ENCODE measurements at regions of chr9 and their contacts with region 1.

Region 1: DNA sequence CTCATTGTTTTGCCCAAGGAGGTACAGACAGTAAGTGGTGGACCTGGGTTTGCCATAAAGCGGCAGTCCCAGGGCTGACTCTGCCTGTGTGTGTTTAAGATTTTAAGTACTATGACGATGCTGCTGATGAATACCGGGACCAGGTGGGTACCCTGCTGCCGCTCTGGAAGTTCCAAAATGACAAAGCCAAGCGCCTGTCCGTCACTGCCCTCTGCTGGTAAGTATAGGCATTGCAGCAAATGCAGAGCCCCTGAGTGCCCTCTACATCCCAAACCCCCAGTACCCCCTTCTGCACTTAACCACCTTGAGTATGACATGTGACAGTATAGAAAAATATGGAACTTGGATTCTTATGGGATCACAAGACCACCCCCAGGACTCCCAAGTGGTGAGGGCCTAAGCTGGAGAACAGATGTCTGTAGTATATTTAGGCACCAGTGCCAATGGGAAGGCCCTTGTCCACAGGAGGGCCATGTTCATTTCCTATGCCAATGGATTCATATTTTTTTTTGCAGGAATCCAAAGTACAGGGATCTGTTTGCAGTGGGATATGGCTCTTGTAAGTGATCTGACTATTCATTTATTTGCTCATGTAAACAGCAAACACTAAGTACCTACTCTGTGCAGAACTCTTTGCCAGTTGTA is 22.0 kb downstream of the ENHO start:
- DNase-seq: peak in 4 of 5 donors; percentile 42 to 48 (median 46)
- ATAC-seq: peak; percentile 30 to 71 (median 54)
- H3K4me3 ChIP-seq: no peak overlapping the region
- H3K27ac ChIP-seq: no peak overlapping the region
- H3K4me1 ChIP-seq: peaks cover 0 to 26% (median 15%) of the 10 kb centered on the region in 12 donors
- H3K27me3 ChIP-seq: peaks cover 0 to 5% (median 0%) of the 10 kb centered on the region in 9 donors
- CTCF ChIP-seq: peak; percentile 94 to 99 (median 98)
- POLR2A ChIP-seq: no peak

Region 2: GRCh38 chr9:34328987-34329832 is 171.5 kb before region 1 on chr9 and contains the starts of genes KIF24 and NUDT2:
- intact Hi-C with region 1: loop called in 7 of 10 experiments (anchors 2 to 10 kb)
- DNase-seq: peak; percentile 96 to 99 (median 98)
- ATAC-seq: peak; percentile 97 to 98 (median 98)
- H3K4me3 ChIP-seq: peak within 1 kb of the TSS; percentile 47 to 88 (median 80)
- H3K27ac ChIP-seq: peak within 1 kb of the TSS; percentile 88 to 96 (median 91)
- H3K4me1 ChIP-seq: peaks cover 0 to 35% (median 14%) of the 10 kb centered on the region in 12 donors
- H3K27me3 ChIP-seq: no peaks in the 10 kb centered on the region
- CTCF ChIP-seq: peak in 4 of 12 donors; percentile 7 to 33 (median 10)
- POLR2A ChIP-seq: peak in 1 of 2 donors; percentile 88
- total RNA-seq, gene KIF24: 0.25 to 1.6 (median 0.67) TPM
- total RNA-seq, gene NUDT2: 14.1 to 21.3 (median 17.2) TPM

Region 3: DNA sequence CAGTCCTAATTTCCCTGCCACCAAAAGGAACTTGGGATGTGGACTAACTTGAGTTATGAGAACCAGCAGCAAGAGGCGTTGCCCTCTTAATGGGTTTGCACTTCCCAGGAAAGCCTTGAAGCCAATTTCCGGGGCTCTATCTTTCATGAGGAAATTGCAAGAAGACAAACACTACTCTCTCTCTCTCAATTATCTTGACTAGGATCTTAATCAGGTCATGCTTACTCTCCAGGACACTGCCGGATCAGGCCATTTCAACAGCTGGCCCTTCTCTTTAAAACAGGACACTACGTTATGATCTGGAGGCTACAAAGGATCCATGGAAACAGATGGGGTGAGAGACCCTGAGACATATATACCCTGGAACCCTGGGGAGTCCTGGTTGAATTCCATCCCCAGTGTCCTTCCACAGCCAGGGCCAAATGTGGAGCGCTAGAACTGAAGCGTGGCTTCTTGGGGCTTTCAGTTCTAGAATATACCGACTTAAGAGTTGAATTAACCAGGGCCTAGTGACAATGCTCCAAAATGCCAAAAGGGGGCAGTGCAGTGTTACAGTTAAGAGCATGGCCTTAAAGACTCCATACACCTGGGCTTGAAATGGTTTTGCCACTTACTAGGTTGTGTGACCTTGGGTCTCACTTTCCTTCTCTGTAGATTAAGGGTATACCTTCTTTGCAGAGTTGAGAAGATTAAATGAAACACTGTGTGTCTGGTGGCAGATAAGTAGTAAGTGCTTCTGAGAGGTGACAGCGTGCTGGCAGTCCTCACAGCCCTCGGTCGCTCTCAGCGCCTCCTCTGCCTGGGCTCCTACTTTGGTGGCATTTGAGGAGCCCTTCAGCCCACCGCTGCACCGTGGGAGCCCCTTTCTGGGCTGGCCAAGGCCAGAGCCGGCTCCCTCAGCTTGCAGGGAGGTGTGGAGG is 63.5 kb before region 1 on chr9:
- intact Hi-C with region 1: loop called (anchors 1 to 2 kb)
- DNase-seq: peak in 4 of 5 donors; percentile 38 to 48 (median 42)
- ATAC-seq: peak; percentile 68 to 89 (median 84)
- H3K4me3 ChIP-seq: no peak overlapping the region
- H3K27ac ChIP-seq: no peak overlapping the region
- H3K4me1 ChIP-seq: peaks cover 3 to 42% (median 28%) of the 10 kb centered on the region in 12 donors
- H3K27me3 ChIP-seq: no peaks in the 10 kb centered on the region
- CTCF ChIP-seq: peak; percentile 66 to 85 (median 79)
- POLR2A ChIP-seq: no peak

Region 4: GRCh38 chr9:34603610-34604231 is 103.0 kb after region 1 on chr9:
- intact Hi-C with region 1: loop called in 2 of 10 experiments (anchors 2 to 10 kb)
- DNase-seq: peak; percentile 70 to 84 (median 78)
- ATAC-seq: peak; percentile 80 to 88 (median 86)
- H3K4me3 ChIP-seq: no peak overlapping the region
- H3K27ac ChIP-seq: no peak overlapping the region
- H3K4me1 ChIP-seq: peaks cover 0 to 5% (median 0%) of the 10 kb centered on the region in 12 donors
- H3K27me3 ChIP-seq: no peaks in the 10 kb centered on the region
- CTCF ChIP-seq: peak; percentile 83 to 95 (median 92)
- POLR2A ChIP-seq: no peak

Region 5: GRCh38 chr9:34802916-34803315 is 302.2 kb after region 1 on chr9:
- intact Hi-C with region 1: no loop called
- DNase-seq: no peak
- ATAC-seq: no peak
- H3K4me3 ChIP-seq: no peak overlapping the region
- H3K27ac ChIP-seq: no peak overlapping the region
- H3K4me1 ChIP-seq: no peaks in the 10 kb centered on the region
- H3K27me3 ChIP-seq: peaks cover 0 to 25% (median 6%) of the 10 kb centered on the region in 9 donors
- CTCF ChIP-seq: no peak
- POLR2A ChIP-seq: no peak

Region 6: GRCh38 chr9:34989003-34989945 is 488.5 kb after region 1 on chr9 and contains the start of gene DNAJB5:
- intact Hi-C with region 1: no loop called
- DNase-seq: peak; percentile 98 to 100 (median 99)
- ATAC-seq: peak; percentile 76 to 86 (median 84)
- H3K4me3 ChIP-seq: peak within 1 kb of the TSS; percentile 65 to 98 (median 82)
- H3K27ac ChIP-seq: peak within 1 kb of the TSS in 11 of 12 donors; percentile 86 to 99 (median 97)
- H3K4me1 ChIP-seq: peaks cover 8 to 54% (median 46%) of the 10 kb centered on the region in 12 donors
- H3K27me3 ChIP-seq: no peaks in the 10 kb centered on the region
- CTCF ChIP-seq: peak in 1 of 12 donors; percentile 17
- POLR2A ChIP-seq: peak; percentile 89 to 93
- total RNA-seq, gene DNAJB5: 33.6 to 134 (median 88.5) TPM

Region 7: DNA sequence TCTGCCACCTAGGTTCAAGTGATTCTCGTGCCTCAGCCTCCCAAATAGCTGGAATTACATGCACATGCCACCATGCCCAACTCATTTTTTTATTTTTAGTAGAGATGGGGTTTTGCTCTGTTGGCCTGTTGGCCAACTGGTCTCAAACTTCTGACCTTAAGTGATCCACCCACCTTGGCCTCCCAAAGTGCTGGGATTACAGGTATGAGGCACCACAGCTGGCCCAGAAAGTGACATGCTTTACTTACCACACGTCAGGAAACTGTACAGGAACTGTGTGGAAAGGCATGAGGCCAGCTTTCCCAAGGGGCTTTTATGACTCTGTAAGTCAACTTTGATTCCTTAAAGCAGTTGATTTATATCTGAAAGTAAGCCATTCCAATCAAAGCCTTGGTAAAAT is 513.8 kb after region 1 on chr9:
- intact Hi-C with region 1: no loop called
- DNase-seq: no peak
- ATAC-seq: no peak
- H3K4me3 ChIP-seq: no peak overlapping the region
- H3K27ac ChIP-seq: no peak overlapping the region
- H3K4me1 ChIP-seq: no peaks in the 10 kb centered on the region
- H3K27me3 ChIP-seq: no peaks in the 10 kb centered on the region
- CTCF ChIP-seq: no peak
- POLR2A ChIP-seq: no peak

Measured in heart left ventricle (tissue), 16 donors.